H1 (cell line): ENCODE measurements at regions of chr22 and their contacts with region 1.

Region 1: GRCh38 chr22:44360686-44361381 is 48.1 kb upstream of the SHISAL1 start:
- DNase-seq: no peak
- H3K4me3 ChIP-seq: no peak overlapping the region
- H3K27ac ChIP-seq: no peak overlapping the region
- H3K4me1 ChIP-seq: peaks cover 0 to 2% (median 0%) of the 10 kb centered on the region in 4 experiments; a peak in 2 of 7 replicates
- H3K27me3 ChIP-seq: no peaks in the 10 kb centered on the region
- CTCF ChIP-seq: peak in 1 of 3 experiments; percentile 4; a peak in 1 of 4 replicates
- EP300 ChIP-seq: no peak
- POLR2A ChIP-seq: no peak
- RAD21 ChIP-seq: peak in 1 of 2 experiments; percentile 3; a peak in 1 of 4 replicates

Region 2: DNA sequence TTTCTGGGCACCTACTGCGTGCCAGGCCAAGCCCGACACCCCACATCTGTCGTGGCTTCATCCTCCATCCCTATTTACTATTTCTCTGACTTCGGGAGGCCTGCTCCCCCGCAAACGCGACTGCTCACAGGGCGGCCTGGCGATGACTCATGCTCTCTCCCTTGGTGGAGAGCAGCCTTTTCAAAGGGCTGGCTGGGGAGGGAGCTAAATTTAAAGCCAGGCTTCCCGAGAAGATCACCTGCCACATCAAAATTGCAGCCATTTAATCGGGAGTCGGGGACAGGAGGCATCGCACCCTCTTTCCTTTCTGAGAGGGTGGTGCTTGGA is 23.2 kb before region 1 on chr22:
- CTCF ChIA-PET with region 1: interaction called, 13 read pairs
- POLR2A ChIA-PET with region 1: no interaction called
- DNase-seq: no peak
- H3K4me3 ChIP-seq: no peak overlapping the region; a peak in 1 of 8 replicates
- H3K27ac ChIP-seq: no peak overlapping the region
- H3K4me1 ChIP-seq: peaks cover 4 to 30% (median 18%) of the 10 kb centered on the region in 4 experiments; a peak in 6 of 7 replicates
- H3K27me3 ChIP-seq: peaks cover 0 to 12% (median 5%) of the 10 kb centered on the region in 4 experiments; a peak in 6 of 7 replicates
- CTCF ChIP-seq: no peak
- EP300 ChIP-seq: no peak
- POLR2A ChIP-seq: no peak
- RAD21 ChIP-seq: no peak

Region 3: GRCh38 chr22:44395118-44396005 is 34.5 kb after region 1 on chr22:
- CTCF ChIA-PET with region 1: no interaction called
- POLR2A ChIA-PET with region 1: no interaction called
- DNase-seq: peak in 1 of 2 experiments; percentile 41
- H3K4me3 ChIP-seq: no peak overlapping the region
- H3K27ac ChIP-seq: no peak overlapping the region
- H3K4me1 ChIP-seq: peaks cover 0 to 6% (median 2%) of the 10 kb centered on the region in 4 experiments; a peak in 5 of 7 replicates
- H3K27me3 ChIP-seq: peaks cover 0 to 2% (median 0%) of the 10 kb centered on the region in 4 experiments; a peak in 2 of 7 replicates
- CTCF ChIP-seq: no peak
- EP300 ChIP-seq: no peak
- POLR2A ChIP-seq: no peak
- RAD21 ChIP-seq: no peak

Region 4: GRCh38 chr22:44486538-44486937 is 125.7 kb after region 1 on chr22:
- CTCF ChIA-PET with region 1: no interaction called
- POLR2A ChIA-PET with region 1: no interaction called
- DNase-seq: no peak
- H3K4me3 ChIP-seq: no peak overlapping the region
- H3K27ac ChIP-seq: no peak overlapping the region
- H3K4me1 ChIP-seq: 0 out of 7 replicates have a peak, but pooled peaks cover 0 to 5% (median under 1%) of the 10 kb centered on the region in 4 experiments
- H3K27me3 ChIP-seq: no peaks in the 10 kb centered on the region
- CTCF ChIP-seq: no peak
- EP300 ChIP-seq: no peak
- POLR2A ChIP-seq: no peak
- RAD21 ChIP-seq: no peak